Activated T-helper 1 cell treated with anti-CD3 and anti-CD28 coated beads, Interleukin-12 subunit alpha, Interleukin-12 subunit beta, Interleukin-2, Interleukin-4 antibody, amounts not matched to agents 30 ng/mL and 10 ng/mL and 1 ng/mL, durations not matched to agents 14 hours and 24 hours and 36 hours (primary cell): ENCODE measurements at regions of chr6 and their contacts with region 1.

Region 1: DNA sequence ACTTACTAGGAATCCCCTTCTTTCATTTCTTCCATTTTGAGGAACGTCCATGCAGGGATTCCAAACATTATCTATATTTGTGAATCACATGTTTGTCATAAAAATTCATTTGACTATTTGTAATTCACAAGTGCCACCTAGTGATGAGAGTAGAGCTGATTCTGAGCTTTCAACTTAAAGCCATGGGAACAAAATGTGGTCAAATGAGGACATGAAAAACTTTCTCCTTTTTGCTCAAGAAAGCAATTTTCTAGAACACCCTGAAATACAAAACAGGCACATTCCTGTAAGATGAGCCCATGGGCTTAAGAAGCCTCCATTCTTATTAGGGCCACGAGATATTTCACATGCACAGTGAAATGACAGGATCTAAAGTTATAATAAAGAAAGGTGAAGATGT is 12.3 kb downstream of the MAP3K7 start:
- DNase-seq: no peak
- H3K4me3 Mint-ChIP-seq: no peak overlapping the region
- H3K27ac Mint-ChIP-seq: no peak overlapping the region
- H3K4me1 Mint-ChIP-seq: no peaks in the 10 kb centered on the region
- H3K27me3 Mint-ChIP-seq: no peaks in the 10 kb centered on the region

Region 2: DNA sequence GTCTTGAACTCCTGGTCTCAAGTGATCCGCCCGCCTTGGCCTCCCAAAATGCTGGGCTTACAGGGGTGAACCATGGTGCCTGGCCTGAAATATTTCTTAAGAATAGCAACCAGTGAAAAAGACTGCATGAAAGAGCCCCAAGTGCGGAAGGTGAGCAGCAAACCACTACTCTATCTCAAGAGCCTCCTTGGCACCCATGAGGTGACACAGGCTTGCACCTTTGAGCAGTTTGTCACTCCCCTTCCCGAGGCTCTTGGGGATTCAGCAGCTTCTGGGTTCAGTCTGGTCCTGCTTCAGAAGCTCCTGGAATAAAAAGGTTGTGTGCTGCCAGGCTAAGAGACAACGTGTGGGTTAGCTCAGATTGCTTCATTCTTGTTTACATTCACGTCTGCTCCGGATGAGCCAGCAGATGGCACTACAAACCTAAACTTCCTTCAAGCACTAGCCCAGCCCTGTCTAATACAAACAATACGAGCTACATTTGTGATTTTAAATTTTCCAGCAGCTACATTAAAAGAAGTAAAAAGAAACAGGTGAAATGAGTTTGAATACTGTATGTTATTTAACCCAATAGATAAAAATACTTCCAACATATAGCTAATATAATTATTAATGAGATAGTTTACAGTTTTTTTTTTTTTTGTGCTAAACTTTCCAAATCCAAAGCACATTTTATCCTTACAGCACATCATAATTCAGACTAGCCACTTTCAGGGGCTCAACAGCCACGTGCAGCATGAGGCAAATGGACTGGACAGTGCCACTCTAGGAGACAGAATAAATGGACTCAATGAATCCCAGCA is 634.2 kb before region 1 on chr6:
- intact Hi-C with region 1: loop called (anchors 5 kb)
- DNase-seq: peak; percentile 57
- H3K4me3 Mint-ChIP-seq: no peak overlapping the region
- H3K27ac Mint-ChIP-seq: no peak overlapping the region
- H3K4me1 Mint-ChIP-seq: peaks cover 25% of the 10 kb centered on the region
- H3K27me3 Mint-ChIP-seq: no peaks in the 10 kb centered on the region

Region 3: DNA sequence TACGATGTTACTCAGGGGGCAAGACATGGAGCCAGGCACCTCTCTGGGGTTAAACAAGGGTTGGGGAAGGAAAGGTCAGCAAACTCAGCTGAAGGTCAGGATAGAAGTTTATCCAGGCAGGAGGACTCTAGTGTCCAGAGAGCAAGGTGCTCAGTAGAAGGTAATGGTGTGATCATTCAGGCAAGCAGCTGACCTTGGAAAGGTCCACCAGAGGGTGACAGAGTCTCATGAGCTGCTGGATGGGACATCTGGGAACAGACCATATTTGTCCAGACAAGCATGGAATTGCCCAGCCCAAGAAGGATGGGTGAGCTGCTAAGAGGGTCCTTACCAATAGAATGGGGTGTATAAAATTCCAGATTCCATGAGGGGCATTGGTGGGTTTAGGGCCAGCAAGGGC is 77.2 kb before region 1 on chr6:
- intact Hi-C with region 1: loop called (anchors 5 kb)
- DNase-seq: no peak
- H3K4me3 Mint-ChIP-seq: no peak overlapping the region
- H3K27ac Mint-ChIP-seq: peak overlapping the region; percentile 7
- H3K4me1 Mint-ChIP-seq: peaks cover 8% of the 10 kb centered on the region
- H3K27me3 Mint-ChIP-seq: peaks cover 9% of the 10 kb centered on the region

Region 4: GRCh38 chr6:90541221-90541620 is 33.4 kb before region 1 on chr6:
- intact Hi-C with region 1: loop called (anchors 2 kb)
- DNase-seq: no peak
- H3K4me3 Mint-ChIP-seq: no peak overlapping the region
- H3K27ac Mint-ChIP-seq: no peak overlapping the region
- H3K4me1 Mint-ChIP-seq: peaks cover 15% of the 10 kb centered on the region
- H3K27me3 Mint-ChIP-seq: no peaks in the 10 kb centered on the region

Region 5: DNA sequence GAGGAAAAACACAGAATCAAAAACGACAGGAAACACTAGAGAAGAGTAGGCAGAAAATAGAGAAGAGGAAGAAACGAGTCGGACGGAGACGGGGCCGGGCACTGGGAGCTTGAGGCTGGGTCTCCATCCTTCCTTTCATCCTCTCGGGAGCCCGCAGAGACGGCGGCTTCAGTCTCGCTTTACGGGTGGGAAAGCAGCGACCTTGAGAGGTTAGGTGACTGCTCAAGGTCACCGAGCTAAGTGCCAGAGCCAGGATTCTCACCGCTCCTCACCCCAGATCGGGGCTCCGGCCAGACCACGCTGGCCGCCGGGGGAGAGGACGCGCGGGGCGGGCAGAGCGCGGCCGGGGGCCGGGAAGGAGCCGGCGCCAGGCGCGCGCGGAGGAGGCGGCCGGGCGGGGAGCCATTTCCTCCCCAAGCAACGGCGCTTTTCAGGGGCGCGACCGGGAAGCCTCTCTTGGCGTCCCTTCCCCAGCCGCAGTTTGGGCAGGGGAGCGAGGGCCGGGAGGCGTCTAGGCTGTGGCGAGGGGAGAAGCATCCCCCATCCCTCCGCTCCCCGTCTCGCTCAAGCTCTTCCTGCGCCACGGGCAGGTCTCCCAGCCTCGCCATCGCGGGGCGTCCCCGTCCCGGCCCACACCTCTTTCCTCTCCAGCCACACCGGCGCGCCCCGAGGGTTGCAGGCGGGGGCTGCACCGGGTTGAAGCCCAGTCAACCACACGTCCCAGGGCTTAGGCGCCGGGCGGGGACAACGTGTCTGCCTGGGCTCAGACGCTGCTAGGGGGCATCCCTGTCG is 36.3 kb after region 1 on chr6:
- intact Hi-C with region 1: no loop called
- DNase-seq: peak; percentile 14
- H3K4me3 Mint-ChIP-seq: peak overlapping the region; percentile 84
- H3K27ac Mint-ChIP-seq: peak overlapping the region; percentile 47
- H3K4me1 Mint-ChIP-seq: peaks cover 13% of the 10 kb centered on the region
- H3K27me3 Mint-ChIP-seq: peaks cover 64% of the 10 kb centered on the region

Region 6: DNA sequence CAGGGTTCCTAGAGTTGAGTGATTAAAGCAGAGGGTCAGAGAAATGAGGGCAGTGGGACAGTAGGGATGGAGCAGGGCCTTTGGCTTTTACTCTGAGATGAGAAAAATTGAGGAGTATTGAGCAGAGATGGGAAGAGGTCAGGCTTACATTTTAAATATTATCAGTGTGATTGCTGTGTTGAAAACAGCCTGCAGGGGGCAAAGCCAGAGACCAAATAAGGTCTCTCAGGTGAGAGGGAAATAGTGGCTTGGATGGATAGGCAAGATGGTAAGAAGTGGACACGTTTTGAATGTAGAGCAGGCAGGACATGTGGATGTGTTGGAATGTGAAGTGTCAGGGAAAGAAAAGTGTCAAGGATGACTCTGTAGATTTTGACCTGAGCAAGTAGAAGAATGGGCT is 117.2 kb after region 1 on chr6:
- intact Hi-C with region 1: no loop called
- DNase-seq: no peak
- H3K4me3 Mint-ChIP-seq: no peak overlapping the region
- H3K27ac Mint-ChIP-seq: no peak overlapping the region
- H3K4me1 Mint-ChIP-seq: no peaks in the 10 kb centered on the region
- H3K27me3 Mint-ChIP-seq: peaks cover 2% of the 10 kb centered on the region